Aorta (tissue), 5 donors: ENCODE measurements at regions of chr1 and their contacts with region 1.

Region 1: DNA sequence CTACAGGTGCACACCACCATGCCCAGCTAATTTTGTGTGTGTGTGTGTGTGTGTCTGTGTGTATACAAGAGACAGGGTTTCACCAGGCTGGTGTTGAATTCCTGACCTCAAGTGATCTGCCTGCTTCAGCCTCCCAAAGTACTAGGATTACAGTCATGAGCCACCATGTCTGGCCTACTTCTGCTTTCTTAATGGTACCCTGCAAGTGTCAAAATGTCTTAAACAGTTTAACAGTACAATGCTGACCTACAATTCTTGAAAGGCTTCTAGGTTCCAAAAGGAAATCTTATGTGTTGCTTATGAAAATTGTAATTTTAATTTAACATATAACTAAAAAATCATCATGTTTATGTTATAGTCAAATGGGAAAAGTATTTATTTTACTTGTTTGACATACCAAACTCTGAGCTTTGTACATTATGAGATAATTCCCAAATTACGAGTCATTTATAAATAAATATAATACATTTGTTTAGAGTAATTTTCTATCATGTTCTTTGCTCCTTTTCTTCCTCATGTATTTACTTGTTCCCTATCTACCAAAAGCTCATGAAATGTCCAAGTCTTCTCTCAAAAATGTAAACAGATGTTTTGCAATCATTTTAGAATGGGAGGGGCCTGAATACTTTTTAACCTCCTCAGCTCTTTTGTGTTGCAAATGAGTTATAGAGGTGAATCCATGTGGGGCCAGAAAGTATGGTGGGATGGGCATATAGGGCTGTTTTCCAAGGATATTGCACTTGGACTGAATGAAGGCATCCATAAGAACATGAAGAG is 8.4 kb upstream of the VCAM1 start:
- DNase-seq: no peak
- ATAC-seq: no peak
- H3K4me3 ChIP-seq: no peak overlapping the region
- H3K27ac ChIP-seq: no peak overlapping the region
- H3K4me1 ChIP-seq: no peaks in the 10 kb centered on the region
- H3K27me3 ChIP-seq: no peaks in the 10 kb centered on the region

Region 2: GRCh38 chr1:100485855-100486258 is 225.2 kb before region 1 on chr1:
- intact Hi-C with region 1: no loop called
- DNase-seq: no peak
- ATAC-seq: no peak
- H3K4me3 ChIP-seq: no peak overlapping the region
- H3K27ac ChIP-seq: no peak overlapping the region
- H3K4me1 ChIP-seq: no peaks in the 10 kb centered on the region
- H3K27me3 ChIP-seq: no peaks in the 10 kb centered on the region

Region 3: DNA sequence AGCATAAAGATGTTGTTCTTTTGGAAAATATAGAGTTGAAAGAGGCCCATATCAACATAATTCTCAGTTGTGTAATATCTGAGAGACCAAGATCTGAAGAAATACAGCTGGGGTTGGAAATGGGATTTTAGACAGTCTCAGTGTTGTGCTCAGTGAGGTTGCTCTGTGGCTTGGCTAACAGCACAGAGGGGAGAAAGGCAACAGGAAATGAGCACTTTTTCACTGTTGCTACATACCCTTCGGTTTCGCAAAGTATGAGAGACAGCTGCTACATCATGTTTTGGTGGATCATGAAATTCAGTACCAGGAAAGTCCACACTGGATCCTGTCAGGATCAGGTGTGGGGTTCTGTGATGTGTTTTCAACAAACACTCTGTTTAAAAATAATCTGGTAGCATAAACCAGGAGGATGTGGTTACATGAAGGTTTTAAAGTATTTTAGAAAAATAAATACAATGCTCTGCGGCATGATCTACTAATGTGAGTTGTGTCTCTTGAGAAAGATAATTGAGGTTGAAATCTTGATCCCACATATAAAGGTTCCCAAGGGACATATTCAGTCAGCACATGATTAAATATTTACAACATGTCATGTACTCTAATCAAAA is 180.1 kb before region 1 on chr1:
- intact Hi-C with region 1: loop called in 1 of 2 experiments (anchors 10 kb)
- DNase-seq: peak in 1 of 2 donors; percentile 57
- ATAC-seq: peak; percentile 83
- H3K4me3 ChIP-seq: no peak overlapping the region
- H3K27ac ChIP-seq: no peak overlapping the region
- H3K4me1 ChIP-seq: no peaks in the 10 kb centered on the region
- H3K27me3 ChIP-seq: no peaks in the 10 kb centered on the region

Region 4: DNA sequence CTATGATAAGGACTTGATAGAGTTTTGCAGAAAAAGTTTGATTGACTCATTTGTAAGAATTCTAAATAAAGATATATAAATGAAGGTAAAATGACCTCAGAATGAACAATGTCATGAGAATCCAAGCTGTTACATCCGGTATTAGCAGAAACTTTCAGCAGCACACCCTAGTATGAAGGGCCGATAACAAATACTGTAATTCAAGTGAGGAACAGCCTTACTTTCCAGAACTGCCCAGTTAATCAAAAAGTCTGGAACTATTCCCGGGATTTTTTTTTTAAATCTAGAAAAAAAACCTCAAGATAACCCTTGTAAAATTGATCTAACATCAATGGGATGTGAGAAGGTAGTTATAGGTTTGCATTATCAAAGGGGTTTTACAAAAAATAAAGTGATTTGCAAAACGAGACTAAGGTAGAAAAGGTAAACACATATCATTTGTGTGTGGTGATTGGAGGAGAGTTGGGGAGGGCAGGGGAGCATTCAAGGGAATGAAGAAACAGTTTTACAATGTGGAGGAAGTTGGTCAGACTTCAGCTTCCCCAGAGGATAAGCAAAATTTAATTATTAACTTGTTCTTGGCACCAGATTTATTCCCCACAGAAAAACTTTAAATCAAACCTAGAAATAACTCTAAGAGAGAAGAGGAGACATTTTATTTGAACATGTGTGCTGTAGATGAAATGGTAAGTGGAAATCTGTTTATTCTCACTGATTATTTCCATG is 67.5 kb before region 1 on chr1:
- intact Hi-C with region 1: loop called in 1 of 2 experiments (anchors 10 kb)
- DNase-seq: no peak
- ATAC-seq: no peak
- H3K4me3 ChIP-seq: no peak overlapping the region
- H3K27ac ChIP-seq: no peak overlapping the region
- H3K4me1 ChIP-seq: peaks cover 0 to 2% of the 10 kb centered on the region in 2 donors
- H3K27me3 ChIP-seq: no peaks in the 10 kb centered on the region

Region 5: DNA sequence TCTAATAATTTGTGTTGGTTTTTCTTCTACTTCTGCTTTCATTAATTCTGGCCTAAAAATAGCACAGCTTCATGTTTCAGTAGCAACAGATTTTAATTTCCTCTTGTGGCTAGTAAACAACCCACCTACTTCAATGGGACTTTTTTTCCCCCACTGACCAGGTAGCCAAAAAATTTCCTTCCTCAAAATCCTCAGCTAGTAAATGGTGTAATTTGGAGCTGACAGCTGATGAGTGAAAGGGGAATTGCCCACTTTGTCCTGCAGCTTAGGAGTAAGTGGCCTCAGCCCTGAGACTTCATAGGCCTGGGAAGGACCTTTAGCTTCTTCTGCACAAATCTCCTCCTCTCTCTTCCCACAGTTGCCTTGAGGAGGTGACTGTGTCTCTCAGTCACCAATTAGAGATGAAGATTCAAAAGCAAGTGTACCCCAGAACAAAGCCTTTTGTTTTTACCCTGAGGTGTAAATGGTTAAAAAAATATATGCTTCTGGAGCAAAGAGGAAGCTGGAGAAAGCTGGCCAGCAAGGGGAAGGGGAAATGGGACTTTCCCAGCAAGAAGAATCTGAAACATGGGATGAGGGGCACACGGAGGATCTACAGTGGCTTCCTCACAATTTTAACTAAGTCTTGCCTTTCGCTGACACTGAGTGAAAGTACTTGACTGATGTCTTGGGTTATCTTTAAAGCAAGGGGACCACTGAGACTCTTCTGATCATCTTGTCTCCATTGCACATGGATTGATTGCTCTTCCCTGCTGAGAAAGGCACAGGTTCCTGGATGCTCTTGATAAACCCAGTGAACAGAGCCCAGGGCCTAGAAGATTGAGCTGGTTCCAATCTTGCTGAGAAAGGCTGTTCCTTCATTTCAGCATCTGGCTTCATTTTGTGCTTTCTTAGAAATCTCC is 27.4 kb before region 1 on chr1:
- intact Hi-C with region 1: no loop called
- DNase-seq: peak in 1 of 2 donors; percentile 42
- ATAC-seq: no peak
- H3K4me3 ChIP-seq: no peak overlapping the region
- H3K27ac ChIP-seq: no peak overlapping the region
- H3K4me1 ChIP-seq: no peaks in the 10 kb centered on the region
- H3K27me3 ChIP-seq: no peaks in the 10 kb centered on the region

Region 6: GRCh38 chr1:100767176-100767890 is 56.2 kb after region 1 on chr1:
- intact Hi-C with region 1: loop called in 1 of 2 experiments (anchors 5 kb)
- DNase-seq: no peak
- ATAC-seq: no peak
- H3K4me3 ChIP-seq: no peak overlapping the region
- H3K27ac ChIP-seq: no peak overlapping the region
- H3K4me1 ChIP-seq: no peaks in the 10 kb centered on the region
- H3K27me3 ChIP-seq: no peaks in the 10 kb centered on the region

Region 7: DNA sequence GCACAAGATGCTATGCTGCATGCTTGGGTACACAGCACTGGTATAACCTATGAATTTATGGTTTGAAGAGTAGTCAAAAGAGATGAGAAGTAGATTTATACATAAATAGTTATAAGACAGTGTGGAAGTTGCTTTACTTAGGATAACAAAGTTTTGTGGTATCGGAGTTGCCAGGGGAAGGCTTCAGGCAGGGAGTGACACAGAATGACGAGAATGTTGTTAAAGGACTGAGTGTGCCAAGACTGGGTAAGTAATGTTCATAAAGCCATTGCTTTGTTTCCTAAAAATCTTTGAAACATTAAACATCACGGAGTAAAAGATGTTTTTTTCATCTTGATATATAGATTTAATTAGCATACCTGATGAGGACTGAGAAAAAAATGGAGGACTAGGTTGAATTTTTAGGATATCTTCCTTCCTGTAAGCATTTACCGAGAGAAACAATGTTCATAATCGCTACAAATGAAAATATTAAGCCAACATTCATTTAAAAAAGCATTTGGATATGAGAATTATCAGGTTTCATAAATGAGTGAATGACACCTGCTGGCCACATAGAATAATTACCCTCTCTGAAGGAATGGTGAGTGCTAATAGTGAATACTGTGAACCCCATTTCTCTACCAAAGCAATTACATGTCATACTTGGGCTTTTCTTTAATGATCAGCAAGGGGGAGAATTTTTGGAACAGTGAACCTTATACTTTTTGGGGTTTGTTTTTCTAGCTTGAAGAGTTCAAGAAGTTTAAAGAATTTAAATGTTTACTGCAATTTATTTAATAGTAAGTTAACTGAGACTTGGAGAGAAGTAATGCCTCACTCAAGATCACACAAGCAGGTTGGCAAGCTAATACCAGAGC is 155.2 kb after region 1 on chr1:
- intact Hi-C with region 1: loop called in 1 of 2 experiments (anchors 10 kb)
- DNase-seq: no peak
- ATAC-seq: peak; percentile 64
- H3K4me3 ChIP-seq: no peak overlapping the region
- H3K27ac ChIP-seq: no peak overlapping the region
- H3K4me1 ChIP-seq: no peaks in the 10 kb centered on the region
- H3K27me3 ChIP-seq: no peaks in the 10 kb centered on the region

Region 8: DNA sequence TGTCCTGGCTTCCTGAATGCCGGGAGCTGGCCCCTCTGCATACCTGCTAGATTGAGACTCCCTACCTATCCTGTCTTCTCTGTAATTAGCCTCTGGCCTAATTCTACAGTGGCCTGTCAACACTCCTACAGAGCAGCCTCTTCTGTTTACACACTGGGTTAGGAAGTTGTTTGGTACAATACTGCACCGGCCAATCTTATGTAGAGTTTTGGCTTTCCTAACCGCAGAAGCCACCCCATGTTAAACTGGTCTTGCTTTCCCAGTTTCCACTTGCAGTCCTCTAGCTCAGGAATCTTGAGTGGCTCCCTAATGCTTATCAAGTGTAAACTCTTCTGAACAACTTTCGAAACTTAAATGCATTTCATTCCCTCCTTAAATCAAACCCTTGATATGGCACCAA is 271.7 kb after region 1 on chr1:
- intact Hi-C with region 1: no loop called
- DNase-seq: no peak
- ATAC-seq: no peak
- H3K4me3 ChIP-seq: no peak overlapping the region
- H3K27ac ChIP-seq: no peak overlapping the region
- H3K4me1 ChIP-seq: no peaks in the 10 kb centered on the region
- H3K27me3 ChIP-seq: peaks cover 0 to 2% of the 10 kb centered on the region in 2 donors